ENCODE measurements at regions of chr6 and their contacts with region 1.

Region 1: GRCh38 chr6:41182069-41183034 is 18.6 kb downstream of the TREML2 start:
- DNase-seq: peak in 8 of 9 donors; percentile 34 to 68 (median 60)
- ATAC-seq: peak; percentile 85
- H3K4me3 ChIP-seq: no peak overlapping the region
- H3K4me3 Mint-ChIP-seq: no peak overlapping the region
- H3K27ac ChIP-seq: no peak overlapping the region
- H3K27ac Mint-ChIP-seq: peak overlapping the region in 5 of 9 donors; percentile 0 to 68 (median 5)
- H3K4me1 ChIP-seq: peaks cover 0 to 17% of the 10 kb centered on the region in 2 donors
- H3K4me1 Mint-ChIP-seq: peaks cover 20 to 43% (median 34%) of the 10 kb centered on the region in 7 donors
- H3K27me3 ChIP-seq: no peaks in the 10 kb centered on the region
- H3K27me3 Mint-ChIP-seq: peaks cover 0 to 10% (median 3%) of the 10 kb centered on the region in 5 donors

Region 2: GRCh38 chr6:41092421-41093140 is 89.8 kb before region 1 on chr6:
- CTCF ChIA-PET with region 1: interaction called, 4 read pairs
- POLR2A ChIA-PET with region 1: no interaction called
- intact Hi-C with region 1: loop called in 1 of 2 experiments (anchors 5 kb)
- DNase-seq: no peak
- ATAC-seq: no peak
- H3K4me3 ChIP-seq: no peak overlapping the region
- H3K4me3 Mint-ChIP-seq: no peak overlapping the region
- H3K27ac ChIP-seq: no peak overlapping the region
- H3K27ac Mint-ChIP-seq: peak overlapping the region in 2 of 9 donors; percentile 54 to 62
- H3K4me1 ChIP-seq: no peaks in the 10 kb centered on the region
- H3K4me1 Mint-ChIP-seq: peaks cover 0 to 14% (median 5%) of the 10 kb centered on the region in 7 donors
- H3K27me3 ChIP-seq: no peaks in the 10 kb centered on the region
- H3K27me3 Mint-ChIP-seq: no peaks in the 10 kb centered on the region

Region 3: GRCh38 chr6:41200296-41200900 is 18.0 kb after region 1 on chr6:
- CTCF ChIA-PET with region 1: interaction called, 9 read pairs
- POLR2A ChIA-PET with region 1: no interaction called
- intact Hi-C with region 1: loop called in 1 of 2 experiments (anchors 1 kb)
- DNase-seq: peak; percentile 34 to 87 (median 78)
- ATAC-seq: peak; percentile 79
- H3K4me3 ChIP-seq: peak overlapping the region; percentile 26
- H3K4me3 Mint-ChIP-seq: peak overlapping the region; percentile 76 to 84 (median 82)
- H3K27ac ChIP-seq: peak overlapping the region; percentile 88
- H3K27ac Mint-ChIP-seq: peak overlapping the region; percentile 95 to 100 (median 98)
- H3K4me1 ChIP-seq: peaks cover 47 to 55% of the 10 kb centered on the region in 2 donors
- H3K4me1 Mint-ChIP-seq: peaks cover 52 to 93% (median 83%) of the 10 kb centered on the region in 7 donors
- H3K27me3 ChIP-seq: no peaks in the 10 kb centered on the region
- H3K27me3 Mint-ChIP-seq: no peaks in the 10 kb centered on the region

Measured in naive thymus-derived CD4-positive, alpha-beta T cell (primary cell).